ENCODE measurements at regions of chr12 and their contacts with region 1.

Region 1: GRCh38 chr12:132812631-132813305 is 15.9 kb downstream of the GOLGA3 start:
- DNase-seq: no peak
- H3K4me3 ChIP-seq: no peak overlapping the region
- H3K27ac ChIP-seq: no peak overlapping the region
- H3K4me1 ChIP-seq: no peaks in the 10 kb centered on the region
- H3K27me3 ChIP-seq: no peaks in the 10 kb centered on the region
- CTCF ChIP-seq: no peak

Region 2: DNA sequence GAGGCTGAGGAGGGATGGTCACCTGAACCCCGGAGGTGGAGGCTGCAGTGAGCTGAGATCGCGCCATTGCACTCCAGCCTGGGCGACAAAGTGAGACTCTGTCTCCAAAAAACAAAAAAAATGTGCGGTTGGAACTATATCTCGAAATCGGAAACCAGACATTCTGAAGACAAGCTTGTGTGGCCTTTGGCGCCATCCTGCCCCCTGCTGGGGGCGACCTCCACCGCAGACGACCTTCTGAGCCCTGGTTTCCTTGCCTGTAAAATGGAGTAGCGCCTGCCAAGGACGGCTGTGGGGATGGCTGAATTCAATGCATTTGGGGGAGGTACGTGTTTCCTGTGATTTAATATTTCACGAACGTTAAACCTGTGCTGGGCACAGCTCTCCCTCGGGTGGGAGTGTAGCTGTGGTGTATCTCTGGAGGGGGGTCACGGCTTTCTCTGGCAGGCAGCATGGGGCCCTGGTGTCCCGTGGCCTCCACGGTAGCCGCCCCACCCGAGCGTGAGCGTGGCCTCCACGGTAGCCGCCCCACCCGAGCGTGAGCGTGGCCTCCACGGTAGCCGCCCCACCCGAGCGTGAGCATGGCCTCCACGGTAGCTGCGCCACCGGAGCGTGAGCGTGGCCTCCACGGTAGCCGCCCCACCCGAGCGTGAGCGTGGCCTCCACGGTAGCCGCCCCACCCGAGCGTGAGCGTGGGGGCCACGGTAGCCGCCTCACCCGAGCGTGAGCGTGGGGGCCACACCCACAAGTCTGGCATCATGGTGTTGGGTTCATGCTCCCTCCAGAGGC is 257.7 kb before region 1 on chr12:
- CTCF ChIA-PET with region 1: no interaction called
- dilution Hi-C with region 1: no loop called
- in situ Hi-C with region 1: no loop called
- intact Hi-C with region 1: no loop called
- DNase-seq: no peak
- H3K4me3 ChIP-seq: no peak overlapping the region
- H3K27ac ChIP-seq: no peak overlapping the region
- H3K4me1 ChIP-seq: no peaks in the 10 kb centered on the region
- H3K27me3 ChIP-seq: no peaks in the 10 kb centered on the region
- CTCF ChIP-seq: peak; percentile 5 to 34

Region 3: DNA sequence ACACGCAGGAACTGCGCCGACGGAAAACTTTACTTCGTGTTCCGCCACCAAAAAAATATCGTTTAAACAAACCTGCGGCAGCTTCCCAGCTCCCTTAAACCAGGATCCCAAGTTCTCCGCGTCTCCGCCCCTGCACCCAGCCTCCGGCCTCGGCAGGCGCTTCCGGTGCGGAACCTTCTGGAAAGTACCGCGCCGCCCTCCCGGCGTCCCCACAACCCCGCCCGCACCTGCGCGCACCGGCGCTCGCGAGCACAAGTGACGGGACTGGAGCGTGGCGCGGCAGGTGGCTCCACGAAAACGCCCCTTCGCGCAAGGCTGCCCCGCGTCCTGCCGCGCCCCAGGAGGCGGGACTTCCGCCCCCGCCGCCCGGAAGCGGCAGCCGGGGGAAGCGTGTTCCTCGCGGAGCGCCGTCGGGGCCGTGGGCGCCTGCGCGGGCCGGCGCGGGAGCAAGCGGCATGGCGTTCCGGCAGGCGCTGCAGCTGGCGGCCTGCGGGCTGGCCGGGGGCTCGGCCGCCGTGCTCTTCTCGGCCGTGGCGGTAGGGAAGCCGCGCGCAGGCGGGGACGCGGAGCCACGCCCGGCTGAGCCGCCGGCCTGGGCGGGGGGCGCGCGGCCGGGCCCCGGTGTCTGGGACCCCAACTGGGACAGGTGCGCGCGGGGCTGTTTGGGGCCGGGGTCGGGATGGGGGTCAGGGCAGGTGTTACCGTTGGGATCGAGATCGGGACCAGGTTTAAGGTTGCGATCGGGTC is 102.2 kb before region 1 on chr12 and contains the start of gene PGAM5:
- CTCF ChIA-PET with region 1: no interaction called
- dilution Hi-C with region 1: loop called (anchors 10 kb)
- in situ Hi-C with region 1: no loop called
- intact Hi-C with region 1: no loop called
- DNase-seq: peak; percentile 91
- H3K4me3 ChIP-seq: peak within 1 kb of the TSS; percentile 79 to 94 (median 86)
- H3K27ac ChIP-seq: peak within 1 kb of the TSS; percentile 54
- H3K4me1 ChIP-seq: peaks cover 9% of the 10 kb centered on the region
- H3K27me3 ChIP-seq: no peaks in the 10 kb centered on the region
- CTCF ChIP-seq: no peak
- total RNA-seq, gene PGAM5: 51.2 to 56.4 TPM

Region 4: DNA sequence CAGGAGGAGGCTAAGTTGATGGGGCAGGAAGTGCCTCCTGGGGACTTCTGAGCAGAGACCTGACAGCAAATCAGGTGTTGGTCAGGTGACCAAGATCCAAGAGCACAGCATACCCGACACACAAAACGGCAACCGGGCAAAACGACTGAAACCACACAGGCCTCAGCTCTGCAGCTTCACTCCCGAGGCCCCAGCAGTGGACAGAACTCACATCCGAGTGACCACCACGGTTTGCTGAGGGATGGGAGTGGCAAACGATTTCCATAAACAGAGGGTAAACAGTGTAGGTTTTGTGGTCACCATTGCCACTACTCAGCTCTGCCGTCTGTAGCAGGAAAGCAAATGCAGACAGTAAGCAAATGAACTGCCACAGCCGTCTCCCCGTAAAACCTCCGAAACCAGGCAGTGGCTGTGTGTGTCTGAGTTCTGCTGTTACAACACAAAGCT is 60.2 kb after region 1 on chr12:
- CTCF ChIA-PET with region 1: no interaction called
- dilution Hi-C with region 1: loop called (anchors 10 kb)
- in situ Hi-C with region 1: no loop called
- intact Hi-C with region 1: no loop called
- DNase-seq: no peak
- H3K4me3 ChIP-seq: no peak overlapping the region
- H3K27ac ChIP-seq: no peak overlapping the region
- H3K4me1 ChIP-seq: no peaks in the 10 kb centered on the region
- H3K27me3 ChIP-seq: no peaks in the 10 kb centered on the region
- CTCF ChIP-seq: no peak

Region 5: GRCh38 chr12:132908145-132909044 is 95.6 kb after region 1 on chr12:
- CTCF ChIA-PET with region 1: no interaction called
- dilution Hi-C with region 1: loop called (anchors 10 kb)
- in situ Hi-C with region 1: no loop called
- intact Hi-C with region 1: no loop called
- DNase-seq: peak; percentile 99
- H3K4me3 ChIP-seq: peak overlapping the region; percentile 83 to 92 (median 91)
- H3K27ac ChIP-seq: peak overlapping the region; percentile 55
- H3K4me1 ChIP-seq: peaks cover 4% of the 10 kb centered on the region
- H3K27me3 ChIP-seq: no peaks in the 10 kb centered on the region
- CTCF ChIP-seq: no peak

Region 6: DNA sequence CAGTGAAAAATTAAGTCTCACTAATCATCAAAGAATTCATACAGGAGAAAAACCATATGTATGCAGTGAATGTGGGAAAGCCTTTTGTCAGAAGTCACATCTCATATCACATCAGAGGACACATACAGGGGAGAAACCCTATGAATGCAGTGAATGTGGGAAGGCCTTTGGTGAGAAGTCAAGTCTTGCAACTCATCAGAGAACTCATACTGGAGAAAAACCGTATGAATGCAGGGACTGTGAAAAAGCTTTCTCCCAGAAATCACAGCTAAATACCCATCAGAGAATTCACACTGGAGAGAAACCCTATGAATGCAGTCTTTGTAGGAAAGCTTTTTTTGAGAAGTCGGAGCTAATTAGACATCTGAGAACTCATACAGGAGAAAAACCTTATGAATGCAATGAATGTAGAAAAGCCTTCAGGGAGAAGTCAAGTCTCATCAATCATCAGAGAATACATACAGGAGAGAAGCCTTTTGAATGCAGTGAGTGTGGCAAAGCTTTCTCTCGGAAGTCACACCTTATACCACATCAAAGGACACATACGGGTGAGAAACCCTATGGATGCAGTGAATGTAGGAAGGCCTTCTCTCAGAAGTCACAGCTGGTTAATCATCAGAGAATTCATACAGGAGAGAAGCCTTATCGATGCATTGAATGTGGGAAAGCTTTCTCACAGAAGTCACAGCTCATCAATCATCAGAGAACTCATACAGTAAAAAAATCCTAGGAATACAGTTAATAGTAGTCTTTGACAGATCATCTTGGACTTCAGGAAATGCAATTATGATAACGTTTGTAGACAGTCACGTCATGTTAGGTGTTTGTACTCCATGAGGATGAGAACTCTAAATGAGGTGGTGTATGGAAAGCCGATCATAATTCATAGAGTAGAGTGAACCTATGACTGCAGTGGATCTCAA is 245.7 kb after region 1 on chr12:
- CTCF ChIA-PET with region 1: no interaction called
- dilution Hi-C with region 1: loop called (anchors 10 kb)
- in situ Hi-C with region 1: no loop called
- intact Hi-C with region 1: no loop called
- DNase-seq: peak; percentile 6
- H3K4me3 ChIP-seq: no peak overlapping the region
- H3K27ac ChIP-seq: no peak overlapping the region
- H3K4me1 ChIP-seq: no peaks in the 10 kb centered on the region
- H3K27me3 ChIP-seq: no peaks in the 10 kb centered on the region
- CTCF ChIP-seq: no peak